Right lobe of liver (tissue), 6 donors: ENCODE measurements at regions of chr4 and their contacts with region 1.

Region 1: GRCh38 chr4:174365018-174365587 is 81.4 kb downstream of the CEP44 start:
- DNase-seq: no peak
- ATAC-seq: peak in 3 of 4 donors; percentile 33 to 52 (median 46)
- H3K4me3 ChIP-seq: no peak overlapping the region
- H3K27ac ChIP-seq: no peak overlapping the region
- H3K4me1 ChIP-seq: no peaks in the 10 kb centered on the region
- H3K27me3 ChIP-seq: no peaks in the 10 kb centered on the region
- CTCF ChIP-seq: peak; percentile 47 to 56 (median 50)
- POLR2A ChIP-seq: no peak

Region 2: DNA sequence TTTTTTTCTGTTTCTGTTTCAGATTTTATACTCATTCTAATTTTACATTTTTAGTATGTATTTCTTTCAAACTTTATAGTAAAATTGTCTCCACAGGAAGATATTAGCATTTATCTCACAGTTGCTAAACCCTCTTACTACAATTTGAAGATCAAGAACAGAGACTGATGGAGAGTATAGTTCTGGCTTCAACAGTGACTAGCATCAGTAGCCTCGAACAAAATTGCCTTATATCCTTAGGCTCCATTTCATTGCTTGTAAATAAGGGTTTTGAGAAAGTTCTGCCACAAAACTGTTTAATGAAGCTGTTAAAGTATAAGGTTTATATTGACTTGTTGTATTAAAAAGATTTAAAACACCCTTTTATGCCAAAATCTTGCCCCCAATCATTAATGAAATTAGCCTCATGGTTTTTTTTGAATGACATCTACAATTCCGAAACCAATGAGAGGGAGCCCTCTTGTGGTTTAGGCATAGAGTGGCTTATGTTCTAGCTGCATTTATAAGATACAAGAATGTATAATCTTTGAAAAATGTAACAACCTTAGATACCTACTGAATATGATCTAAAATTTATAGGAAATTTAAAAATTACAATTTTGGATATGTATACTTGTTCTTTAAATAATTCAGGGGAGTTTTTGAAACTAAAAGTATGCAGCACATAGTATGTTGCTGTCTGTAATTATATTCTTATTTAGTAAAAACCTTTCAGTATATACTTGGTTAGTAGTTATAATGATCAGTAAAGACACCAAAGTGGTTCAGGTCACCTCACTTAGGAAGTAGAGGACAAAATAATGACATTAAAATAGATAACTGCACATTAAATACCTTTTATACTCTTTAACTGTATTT is 267.0 kb after region 1 on chr4:
- intact Hi-C with region 1: loop called (anchors 10 kb)
- DNase-seq: no peak
- ATAC-seq: peak; percentile 69 to 82 (median 79)
- H3K4me3 ChIP-seq: no peak overlapping the region
- H3K27ac ChIP-seq: no peak overlapping the region
- H3K4me1 ChIP-seq: no peaks in the 10 kb centered on the region
- H3K27me3 ChIP-seq: no peaks in the 10 kb centered on the region
- CTCF ChIP-seq: peak; percentile 71 to 87 (median 80)
- POLR2A ChIP-seq: no peak

Region 3: GRCh38 chr4:174648812-174649211 is 283.7 kb after region 1 on chr4:
- intact Hi-C with region 1: no loop called
- DNase-seq: no peak
- ATAC-seq: no peak
- H3K4me3 ChIP-seq: no peak overlapping the region
- H3K27ac ChIP-seq: no peak overlapping the region
- H3K4me1 ChIP-seq: no peaks in the 10 kb centered on the region
- H3K27me3 ChIP-seq: no peaks in the 10 kb centered on the region
- CTCF ChIP-seq: no peak
- POLR2A ChIP-seq: no peak